ENCODE measurements at regions of chr17 and their contacts with region 1.

Region 1: GRCh38 chr17:5078106-5079028 is at the start of gene ZFP3:
- DNase-seq: peak; percentile 58
- H3K4me3 ChIP-seq: peak within 1 kb of the TSS; percentile 37 to 66 (median 52)
- H3K27ac ChIP-seq: no peak within 1 kb of the TSS
- H3K4me1 ChIP-seq: peaks cover 9% of the 10 kb centered on the region
- H3K27me3 ChIP-seq: no peaks in the 10 kb centered on the region
- CTCF ChIP-seq: no peak
- total RNA-seq, gene ZFP3: 0.09 to 3.0 TPM

Region 2: GRCh38 chr17:5031365-5032082 is 46.8 kb before region 1 on chr17:
- CTCF ChIA-PET with region 1: interaction called, 19 read pairs
- dilution Hi-C with region 1: no loop called
- in situ Hi-C with region 1: no loop called
- intact Hi-C with region 1: no loop called
- DNase-seq: peak; percentile 52
- H3K4me3 ChIP-seq: peak overlapping the region in 1 of 3 experiments; percentile 33
- H3K27ac ChIP-seq: no peak overlapping the region
- H3K4me1 ChIP-seq: peaks cover 5% of the 10 kb centered on the region
- H3K27me3 ChIP-seq: no peaks in the 10 kb centered on the region
- CTCF ChIP-seq: peak; percentile 77 to 81

Region 3: DNA sequence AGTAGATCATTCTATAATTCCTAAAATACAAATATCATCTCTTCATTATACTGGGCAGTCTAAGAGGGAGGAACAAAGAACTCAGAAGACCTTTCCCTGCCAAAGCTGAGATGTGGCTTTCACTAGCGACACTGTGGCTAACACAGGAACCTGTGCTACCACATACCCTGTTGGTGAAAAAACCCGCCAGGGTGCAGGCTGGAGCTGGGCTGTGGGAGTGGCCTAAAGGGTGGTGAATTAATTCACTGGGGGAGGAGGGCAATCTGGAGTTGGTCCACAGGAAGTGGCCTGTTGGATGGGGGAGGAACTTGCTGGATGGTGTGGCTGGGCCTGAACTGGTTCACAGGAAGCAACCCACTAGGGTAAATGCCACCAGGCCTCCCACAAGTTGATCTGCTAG is 105.9 kb after region 1 on chr17:
- CTCF ChIA-PET with region 1: no interaction called
- dilution Hi-C with region 1: loop called (anchors 5 kb)
- in situ Hi-C with region 1: no loop called
- intact Hi-C with region 1: no loop called
- DNase-seq: no peak
- H3K4me3 ChIP-seq: no peak overlapping the region
- H3K27ac ChIP-seq: no peak overlapping the region
- H3K4me1 ChIP-seq: no peaks in the 10 kb centered on the region
- H3K27me3 ChIP-seq: no peaks in the 10 kb centered on the region
- CTCF ChIP-seq: no peak

Region 4: GRCh38 chr17:5769593-5770354 is 691.4 kb after region 1 on chr17:
- CTCF ChIA-PET with region 1: no interaction called
- dilution Hi-C with region 1: no loop called
- in situ Hi-C with region 1: no loop called
- intact Hi-C with region 1: no loop called
- DNase-seq: no peak
- H3K4me3 ChIP-seq: no peak overlapping the region
- H3K27ac ChIP-seq: no peak overlapping the region
- H3K4me1 ChIP-seq: no peaks in the 10 kb centered on the region
- H3K27me3 ChIP-seq: peaks cover 26% of the 10 kb centered on the region
- CTCF ChIP-seq: no peak